CD4-positive, alpha-beta T cell (primary cell): ENCODE measurements at regions of chr1 and their contacts with region 1.

Region 1: GRCh38 chr1:32394141-32394889 is at the start of gene BSDC1:
- DNase-seq: peak; percentile 95 to 99 (median 98)
- ATAC-seq: peak; percentile 97
- H3K4me3 ChIP-seq: peak within 1 kb of the TSS; percentile 85
- H3K4me3 Mint-ChIP-seq: peak within 1 kb of the TSS; percentile 98
- H3K27ac ChIP-seq: peak within 1 kb of the TSS; percentile 92 to 96
- H3K27ac Mint-ChIP-seq: no peak within 1 kb of the TSS
- H3K4me1 ChIP-seq: peaks cover 40% of the 10 kb centered on the region
- H3K4me1 Mint-ChIP-seq: peaks cover 24% of the 10 kb centered on the region
- H3K27me3 ChIP-seq: no peaks in the 10 kb centered on the region
- H3K27me3 Mint-ChIP-seq: no peaks in the 10 kb centered on the region
- CTCF ChIP-seq: no peak
- total RNA-seq, gene BSDC1: 186 to 190 TPM

Region 2: GRCh38 chr1:31644560-31645273 is 749.6 kb before region 1 on chr1 and contains the start of gene PEF1:
- CTCF ChIA-PET with region 1: no interaction called
- POLR2A ChIA-PET with region 1: interaction called, 9 read pairs
- intact Hi-C with region 1: loop called in 1 of 2 experiments (anchors 10 kb)
- DNase-seq: peak; percentile 98 to 100 (median 99)
- ATAC-seq: peak; percentile 89
- H3K4me3 ChIP-seq: peak within 1 kb of the TSS; percentile 85
- H3K4me3 Mint-ChIP-seq: peak within 1 kb of the TSS; percentile 99
- H3K27ac ChIP-seq: peak within 1 kb of the TSS; percentile 99
- H3K27ac Mint-ChIP-seq: peak within 1 kb of the TSS; percentile 100
- H3K4me1 ChIP-seq: peaks cover 52% of the 10 kb centered on the region
- H3K4me1 Mint-ChIP-seq: peaks cover 29% of the 10 kb centered on the region
- H3K27me3 ChIP-seq: no peaks in the 10 kb centered on the region
- H3K27me3 Mint-ChIP-seq: no peaks in the 10 kb centered on the region
- CTCF ChIP-seq: no peak
- total RNA-seq, gene PEF1: 42.3 to 45.9 TPM

Region 3: DNA sequence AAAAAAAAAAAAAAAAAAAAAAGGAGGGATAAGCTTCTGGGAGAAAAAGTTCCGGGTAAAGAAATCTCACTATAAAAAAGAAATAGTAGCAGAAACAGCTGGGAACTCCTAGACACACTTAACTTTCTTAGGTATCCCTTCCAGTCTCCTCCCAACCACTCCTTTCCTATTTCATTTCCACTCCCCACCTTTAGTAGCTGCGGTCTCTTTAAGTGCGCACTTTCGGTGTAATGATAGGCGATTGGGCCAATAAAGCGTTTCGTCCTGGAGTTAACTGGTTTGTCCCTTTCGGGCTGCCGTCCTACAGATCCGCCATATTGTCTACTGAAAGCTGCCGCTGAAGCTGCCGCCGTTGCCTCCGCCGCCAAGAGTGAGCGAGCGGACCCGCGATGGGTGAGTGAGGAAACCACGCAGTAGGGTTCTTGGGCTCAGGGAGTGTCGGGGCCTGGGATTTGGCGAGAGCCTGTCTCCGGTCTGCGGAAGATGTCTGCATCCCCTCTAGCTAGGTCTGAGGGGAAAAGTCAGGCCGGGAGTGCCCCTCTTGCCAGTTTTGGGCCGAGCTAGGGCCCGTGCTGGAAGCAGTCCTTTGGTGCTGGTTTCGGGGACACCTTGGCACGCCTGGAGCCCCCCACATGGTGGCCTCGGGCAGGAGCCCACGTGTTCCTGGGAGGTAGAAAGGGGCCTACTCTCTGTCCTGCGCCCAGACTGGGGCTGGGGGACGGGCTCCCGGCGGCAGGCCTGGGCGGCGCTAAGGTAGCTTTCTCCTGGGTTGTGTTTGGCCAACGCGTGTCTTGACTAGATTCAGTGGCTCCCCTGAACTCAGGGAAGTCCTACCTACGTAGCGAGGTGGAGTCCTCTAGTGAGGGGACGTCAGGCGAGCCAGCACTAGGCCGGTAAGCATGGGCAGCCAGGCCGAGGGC is 286.3 kb before region 1 on chr1 and contains the start of gene KPNA6:
- CTCF ChIA-PET with region 1: no interaction called
- POLR2A ChIA-PET with region 1: interaction called, 22 read pairs
- intact Hi-C with region 1: loop called in 1 of 2 experiments (anchors 1 kb)
- DNase-seq: peak; percentile 81 to 96 (median 88)
- ATAC-seq: peak; percentile 88
- H3K4me3 ChIP-seq: peak within 1 kb of the TSS; percentile 99
- H3K4me3 Mint-ChIP-seq: peak within 1 kb of the TSS; percentile 99
- H3K27ac ChIP-seq: peak within 1 kb of the TSS; percentile 92 to 96
- H3K27ac Mint-ChIP-seq: peak within 1 kb of the TSS; percentile 98
- H3K4me1 ChIP-seq: peaks cover 45% of the 10 kb centered on the region
- H3K4me1 Mint-ChIP-seq: peaks cover 53% of the 10 kb centered on the region
- H3K27me3 ChIP-seq: no peaks in the 10 kb centered on the region
- H3K27me3 Mint-ChIP-seq: no peaks in the 10 kb centered on the region
- CTCF ChIP-seq: no peak
- total RNA-seq, gene KPNA6: 47.1 to 47.8 TPM

Region 4: GRCh38 chr1:32215629-32216480 is 178.5 kb before region 1 on chr1:
- CTCF ChIA-PET with region 1: interaction called, 3 read pairs
- POLR2A ChIA-PET with region 1: interaction called, 13 read pairs
- intact Hi-C with region 1: no loop called
- DNase-seq: peak; percentile 33 to 81 (median 50)
- ATAC-seq: peak; percentile 96
- H3K4me3 ChIP-seq: no peak overlapping the region
- H3K4me3 Mint-ChIP-seq: no peak overlapping the region
- H3K27ac ChIP-seq: no peak overlapping the region
- H3K27ac Mint-ChIP-seq: peak overlapping the region; percentile 62
- H3K4me1 ChIP-seq: peaks cover 16% of the 10 kb centered on the region
- H3K4me1 Mint-ChIP-seq: peaks cover 13% of the 10 kb centered on the region
- H3K27me3 ChIP-seq: no peaks in the 10 kb centered on the region
- H3K27me3 Mint-ChIP-seq: no peaks in the 10 kb centered on the region
- CTCF ChIP-seq: peak; percentile 85

Region 5: GRCh38 chr1:32247983-32248889 is 146.1 kb before region 1 on chr1:
- CTCF ChIA-PET with region 1: no interaction called
- POLR2A ChIA-PET with region 1: interaction called, 13 read pairs
- intact Hi-C with region 1: no loop called
- DNase-seq: peak; percentile 56 to 86 (median 66)
- ATAC-seq: no peak
- H3K4me3 ChIP-seq: peak overlapping the region; percentile 41
- H3K4me3 Mint-ChIP-seq: peak overlapping the region; percentile 86
- H3K27ac ChIP-seq: peak overlapping the region; percentile 87 to 94
- H3K27ac Mint-ChIP-seq: peak overlapping the region; percentile 99
- H3K4me1 ChIP-seq: peaks cover 65% of the 10 kb centered on the region
- H3K4me1 Mint-ChIP-seq: peaks cover 58% of the 10 kb centered on the region
- H3K27me3 ChIP-seq: no peaks in the 10 kb centered on the region
- H3K27me3 Mint-ChIP-seq: no peaks in the 10 kb centered on the region
- CTCF ChIP-seq: peak; percentile 92

Region 6: GRCh38 chr1:32351399-32352238 is 42.7 kb before region 1 on chr1:
- CTCF ChIA-PET with region 1: interaction called, 5 read pairs
- POLR2A ChIA-PET with region 1: interaction called, 16 read pairs
- intact Hi-C with region 1: loop called (anchors 1 kb)
- DNase-seq: peak; percentile 84 to 97 (median 90)
- ATAC-seq: peak; percentile 95
- H3K4me3 ChIP-seq: peak overlapping the region; percentile 66
- H3K4me3 Mint-ChIP-seq: peak overlapping the region; percentile 87
- H3K27ac ChIP-seq: peak overlapping the region; percentile 53 to 78
- H3K27ac Mint-ChIP-seq: peak overlapping the region; percentile 76
- H3K4me1 ChIP-seq: peaks cover 48% of the 10 kb centered on the region
- H3K4me1 Mint-ChIP-seq: peaks cover 51% of the 10 kb centered on the region
- H3K27me3 ChIP-seq: no peaks in the 10 kb centered on the region
- H3K27me3 Mint-ChIP-seq: no peaks in the 10 kb centered on the region
- CTCF ChIP-seq: no peak

Region 7: DNA sequence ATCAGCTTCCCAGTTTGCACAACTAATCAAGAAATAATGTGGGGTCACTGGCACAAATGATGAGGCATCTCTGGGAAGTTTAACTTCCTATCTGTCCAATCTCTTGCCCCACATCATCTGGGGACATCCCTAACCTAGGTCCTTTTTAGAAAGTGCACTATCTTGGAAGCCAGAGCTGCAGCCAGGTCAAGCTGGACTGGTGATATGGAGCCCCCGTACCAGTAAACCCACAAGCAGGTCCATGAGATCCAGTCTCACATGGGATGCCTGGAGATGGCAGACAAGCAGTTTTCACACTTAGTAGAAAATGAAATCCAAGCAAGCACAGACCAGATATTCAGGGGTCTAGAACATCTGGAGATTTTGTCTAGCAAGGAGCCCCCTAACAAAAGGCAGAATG is 27.5 kb after region 1 on chr1:
- CTCF ChIA-PET with region 1: no interaction called
- POLR2A ChIA-PET with region 1: no interaction called
- intact Hi-C with region 1: no loop called
- DNase-seq: no peak
- ATAC-seq: no peak
- H3K4me3 ChIP-seq: no peak overlapping the region
- H3K4me3 Mint-ChIP-seq: no peak overlapping the region
- H3K27ac ChIP-seq: no peak overlapping the region
- H3K27ac Mint-ChIP-seq: no peak overlapping the region
- H3K4me1 ChIP-seq: peaks cover 3% of the 10 kb centered on the region
- H3K4me1 Mint-ChIP-seq: no peaks in the 10 kb centered on the region
- H3K27me3 ChIP-seq: peaks cover 10% of the 10 kb centered on the region in 2 experiments
- H3K27me3 Mint-ChIP-seq: peaks cover 33% of the 10 kb centered on the region
- CTCF ChIP-seq: no peak